ENCODE measurements at regions of chr2 and their contacts with region 1.

Region 1: DNA sequence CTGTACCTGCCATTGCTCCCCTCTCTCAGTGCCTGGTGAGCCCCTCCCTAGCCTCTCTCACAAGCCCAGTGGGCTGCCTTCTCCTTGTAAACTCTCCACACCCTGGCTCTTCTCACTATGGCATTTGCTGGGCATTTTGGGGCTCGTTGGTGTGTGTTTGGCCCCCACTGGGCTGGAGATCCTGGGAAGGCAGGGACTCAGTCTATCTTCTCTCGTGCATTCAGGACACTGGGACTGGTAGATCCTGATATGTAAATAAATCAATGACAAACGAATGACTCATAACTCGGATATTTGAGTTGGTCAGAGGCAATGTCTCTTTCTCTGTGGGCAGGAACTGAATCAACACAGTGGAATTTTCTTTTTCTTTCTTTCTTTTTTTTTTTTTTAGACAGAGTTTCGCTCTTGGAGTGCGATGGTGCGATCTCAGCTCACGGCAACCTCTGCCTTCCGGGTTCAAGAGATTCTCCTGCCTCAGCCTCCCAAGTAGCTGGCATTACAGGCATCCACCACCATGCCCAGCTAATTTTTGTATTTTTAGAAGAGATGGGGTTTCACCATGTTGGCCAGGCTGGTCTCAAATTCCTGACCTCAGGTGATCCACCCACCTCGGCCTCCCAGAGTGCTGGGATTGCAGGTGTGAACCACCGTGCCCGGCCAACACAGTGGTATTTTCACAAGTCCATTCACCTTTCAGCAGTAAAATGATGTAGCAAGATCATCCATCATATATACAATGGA is 144.6 kb upstream of the SPRED2 start:
- DNase-seq: no peak
- H3K4me3 Mint-ChIP-seq: no peak overlapping the region
- H3K27ac Mint-ChIP-seq: no peak overlapping the region
- H3K4me1 Mint-ChIP-seq: peaks cover 3% of the 10 kb centered on the region
- H3K27me3 Mint-ChIP-seq: peaks cover 21% of the 10 kb centered on the region

Region 2: DNA sequence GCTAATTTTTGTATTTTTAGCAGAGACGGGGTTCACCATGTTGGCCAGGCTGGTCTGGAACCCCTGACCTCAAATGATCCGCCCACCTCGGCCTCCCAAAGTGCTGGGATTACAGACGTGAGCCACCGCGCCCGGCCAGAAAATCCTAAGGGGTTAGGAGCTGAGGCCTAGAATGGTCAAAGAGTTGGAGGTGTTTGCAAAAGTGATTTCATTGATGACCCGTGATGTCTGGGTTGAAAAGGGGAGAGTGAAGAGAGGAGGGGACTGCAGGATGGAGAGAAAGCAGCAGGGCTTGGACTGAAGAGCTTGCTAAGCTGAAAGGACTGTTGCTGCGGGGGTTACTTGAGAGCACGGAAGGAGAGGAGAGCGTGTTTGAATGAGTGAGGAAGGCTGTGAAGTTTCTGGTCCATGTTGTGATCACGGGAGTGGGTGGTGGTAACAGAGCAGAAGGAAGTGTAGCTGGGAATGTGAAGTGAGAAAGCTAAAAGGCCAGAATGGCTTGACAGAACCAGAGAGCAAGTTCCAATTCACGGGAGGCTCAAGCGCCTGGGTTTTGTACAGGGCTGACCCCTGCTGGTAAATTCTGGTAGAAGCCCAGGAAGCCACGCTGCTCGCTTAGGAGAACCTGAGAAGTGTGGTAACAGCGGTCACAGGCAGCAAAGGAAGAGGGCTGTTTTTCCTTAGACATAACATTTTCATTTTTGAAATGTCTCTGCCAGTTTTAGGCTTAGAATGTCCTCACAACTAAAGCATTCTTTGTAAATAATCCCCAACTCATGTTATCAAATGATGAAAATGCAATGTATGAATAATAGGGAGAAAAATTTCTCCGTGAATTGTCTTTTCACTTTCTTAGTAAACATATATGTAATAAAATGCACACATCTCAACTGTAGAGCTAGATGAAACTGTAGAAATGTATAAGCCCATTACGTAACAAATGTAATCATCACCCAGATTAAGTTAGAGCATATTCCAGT is 389.9 kb before region 1 on chr2:
- intact Hi-C with region 1: loop called (anchors 10 kb)
- DNase-seq: peak; percentile 52
- H3K4me3 Mint-ChIP-seq: no peak overlapping the region
- H3K27ac Mint-ChIP-seq: no peak overlapping the region
- H3K4me1 Mint-ChIP-seq: peaks cover 9% of the 10 kb centered on the region
- H3K27me3 Mint-ChIP-seq: peaks cover 19% of the 10 kb centered on the region

Region 3: DNA sequence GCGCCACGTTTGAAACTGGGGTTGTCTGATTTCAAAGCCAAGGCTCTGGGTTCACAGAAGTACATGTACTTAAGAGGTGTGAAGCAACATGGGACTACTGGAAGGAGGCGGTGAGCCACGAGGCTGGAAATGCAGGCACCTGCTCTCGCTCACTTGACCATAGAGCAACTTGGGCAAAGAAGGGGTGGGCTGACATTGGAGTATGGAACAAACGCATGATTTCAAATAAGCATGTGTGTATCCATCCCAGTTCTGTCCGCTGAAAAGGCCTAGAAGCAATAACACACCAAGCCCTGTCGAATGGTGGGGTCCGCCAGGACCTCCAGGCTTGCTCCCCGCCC is 350.0 kb before region 1 on chr2:
- intact Hi-C with region 1: no loop called
- DNase-seq: no peak
- H3K4me3 Mint-ChIP-seq: peak overlapping the region; percentile 97
- H3K27ac Mint-ChIP-seq: peak overlapping the region; percentile 96
- H3K4me1 Mint-ChIP-seq: peaks cover 21% of the 10 kb centered on the region
- H3K27me3 Mint-ChIP-seq: no peaks in the 10 kb centered on the region

Region 4: DNA sequence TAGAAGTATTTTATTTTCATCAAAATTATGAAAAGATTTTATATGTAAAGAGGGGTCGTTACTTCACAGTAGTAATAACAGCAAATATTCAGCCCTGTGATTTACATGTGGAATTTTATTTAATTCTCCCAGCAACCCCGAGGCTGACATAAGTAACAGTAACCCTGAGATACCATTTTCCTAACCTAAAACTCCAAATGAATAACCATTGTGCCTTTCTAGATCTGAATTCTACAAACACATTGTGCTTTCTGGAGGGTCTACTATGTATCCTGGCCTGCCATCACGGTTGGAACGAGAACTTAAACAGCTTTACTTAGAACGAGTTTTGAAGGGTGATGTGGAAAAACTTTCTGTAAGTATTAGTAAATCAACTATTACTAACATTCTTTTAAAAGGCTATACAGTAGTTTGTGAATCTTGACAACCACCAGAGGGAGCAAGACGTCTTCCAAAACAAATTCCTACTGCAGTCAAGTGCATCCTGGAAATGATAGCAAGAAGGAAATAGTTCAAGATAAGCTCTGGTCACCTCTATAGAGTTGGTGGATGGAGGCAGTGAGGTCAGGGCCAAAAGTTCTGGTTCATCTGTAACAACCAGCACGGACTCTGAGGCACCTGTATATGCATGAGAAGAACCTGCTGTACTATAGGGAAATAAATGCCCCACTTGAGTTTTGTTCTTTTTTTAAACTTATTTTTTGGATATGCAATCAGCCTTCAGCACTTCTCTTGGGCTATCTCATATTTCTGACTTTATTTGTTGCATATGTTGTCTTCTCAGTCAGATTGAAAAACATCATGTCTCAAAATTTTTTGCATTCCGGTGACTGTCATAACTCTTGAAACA is 312.0 kb before region 1 on chr2:
- intact Hi-C with region 1: loop called (anchors 1 kb)
- DNase-seq: no peak
- H3K4me3 Mint-ChIP-seq: no peak overlapping the region
- H3K27ac Mint-ChIP-seq: no peak overlapping the region
- H3K4me1 Mint-ChIP-seq: peaks cover 13% of the 10 kb centered on the region
- H3K27me3 Mint-ChIP-seq: no peaks in the 10 kb centered on the region

Region 5: DNA sequence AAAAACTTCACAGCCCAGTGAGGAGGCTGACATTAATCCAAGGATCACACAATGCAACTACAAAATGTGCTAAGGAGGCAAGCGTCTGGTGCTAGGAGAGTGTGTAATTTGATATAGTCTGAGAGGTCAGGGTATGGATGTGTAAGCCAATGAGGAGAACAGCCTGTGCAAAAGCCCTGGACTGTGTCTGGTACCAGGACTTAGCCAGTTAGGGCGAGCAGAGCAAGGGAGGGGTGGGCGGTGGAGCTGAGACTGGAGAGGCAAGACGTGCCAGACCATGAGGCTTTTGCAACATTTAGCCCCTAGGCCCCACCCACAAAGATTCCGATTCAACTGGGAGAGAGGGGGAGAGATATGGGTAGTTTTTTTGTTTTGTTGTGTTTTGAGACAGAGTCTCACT is 111.2 kb before region 1 on chr2:
- intact Hi-C with region 1: no loop called
- DNase-seq: no peak
- H3K4me3 Mint-ChIP-seq: no peak overlapping the region
- H3K27ac Mint-ChIP-seq: no peak overlapping the region
- H3K4me1 Mint-ChIP-seq: no peaks in the 10 kb centered on the region
- H3K27me3 Mint-ChIP-seq: peaks cover 15% of the 10 kb centered on the region

Measured in activated T-helper 2 cell treated with anti-CD3 and anti-CD28 coated beads, Interferon-gamma antibody, Interleukin-2, Interleukin-4, amounts not matched to agents 10 μg/mL and 5 μg/mL and 100 μg/mL, durations not matched to agents 14 hours and 24 hours and 36 hours (primary cell).